HEK293 (cell line): ENCODE measurements at regions of chr16 and their contacts with region 1.

Region 1: DNA sequence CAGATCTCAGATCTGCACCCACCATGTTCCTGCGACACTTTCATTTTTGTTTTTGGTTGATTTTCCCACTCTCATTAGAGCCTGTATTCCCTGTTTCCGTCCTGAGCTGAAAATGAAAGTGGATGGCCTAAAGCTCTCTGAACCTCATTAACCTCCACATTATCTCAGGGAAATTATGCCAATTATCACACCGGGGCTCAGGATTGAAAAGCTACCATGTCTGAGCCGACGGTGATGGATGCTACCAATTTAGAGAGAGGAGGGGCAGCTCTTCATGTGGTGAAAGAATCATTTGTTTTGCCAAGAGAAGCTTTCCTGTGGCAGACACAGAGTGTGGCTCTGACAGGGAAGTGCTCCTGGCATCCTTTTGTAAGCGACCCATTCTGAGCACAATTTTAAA is 410.4 kb upstream of the CDH11 start:
- H3K4me3 ChIP-seq: no peak overlapping the region
- H3K27ac ChIP-seq: no peak overlapping the region
- H3K4me1 ChIP-seq: no peaks in the 10 kb centered on the region
- CTCF ChIP-seq: no peak

Region 2: DNA sequence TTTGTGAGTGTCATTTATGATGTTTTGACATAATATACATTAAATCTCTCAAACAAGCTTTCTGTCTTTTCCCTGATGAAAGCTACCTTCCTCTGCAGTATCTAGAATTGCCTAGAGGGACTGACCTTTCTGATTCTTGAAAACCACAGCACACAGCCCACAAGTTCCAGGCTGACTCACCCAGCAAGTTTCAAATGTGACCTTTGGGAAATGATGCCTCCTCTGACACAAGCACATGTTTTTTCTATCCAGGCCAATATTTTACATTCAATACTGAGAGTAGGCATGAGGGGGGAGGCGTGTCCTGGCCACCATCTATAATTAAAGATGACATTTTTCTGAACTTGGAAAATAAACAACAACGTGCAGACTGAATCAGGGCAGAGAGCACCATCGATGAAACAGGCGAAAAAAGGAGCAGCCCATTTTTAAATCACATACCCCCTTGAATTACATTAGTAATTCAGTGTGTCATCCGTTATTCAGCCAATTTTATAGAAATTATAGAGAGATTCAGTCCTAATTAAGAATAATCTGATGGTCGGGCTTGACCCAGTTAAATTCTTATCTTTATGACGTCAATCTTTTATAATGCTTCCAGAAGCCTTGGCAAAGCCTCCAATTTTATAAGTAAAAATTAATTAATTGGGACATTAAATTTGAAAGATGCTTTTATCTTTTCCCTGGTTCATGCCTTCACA is 117.8 kb before region 1 on chr16:
- CTCF ChIA-PET with region 1: no interaction called
- POLR2A ChIA-PET with region 1: no interaction called
- H3K4me3 ChIP-seq: no peak overlapping the region
- H3K27ac ChIP-seq: no peak overlapping the region
- H3K4me1 ChIP-seq: peaks cover 4% of the 10 kb centered on the region
- CTCF ChIP-seq: no peak

Region 3: DNA sequence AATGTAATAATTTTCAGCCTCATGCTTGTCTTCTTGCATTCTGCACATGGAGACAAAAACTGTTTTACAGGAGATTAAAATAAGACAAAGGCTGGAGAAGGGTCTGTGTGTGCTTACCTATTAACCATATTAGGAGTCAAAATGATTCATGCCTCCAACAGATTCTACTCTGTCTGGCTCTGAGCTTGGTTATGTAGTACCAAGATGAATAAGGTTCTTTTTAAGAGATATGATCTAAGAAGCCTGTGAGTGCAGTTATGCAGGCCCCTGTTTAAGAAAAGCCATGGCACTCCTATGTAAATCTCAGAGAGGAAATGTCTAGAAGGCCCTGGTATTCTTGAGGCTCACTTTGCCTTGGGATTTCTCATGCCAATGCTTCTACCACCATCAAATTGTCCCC is 76.2 kb after region 1 on chr16:
- CTCF ChIA-PET with region 1: no interaction called
- POLR2A ChIA-PET with region 1: interaction called, 12 read pairs
- H3K4me3 ChIP-seq: no peak overlapping the region
- H3K27ac ChIP-seq: no peak overlapping the region
- H3K4me1 ChIP-seq: no peaks in the 10 kb centered on the region
- CTCF ChIP-seq: no peak